ENCODE measurements at regions of chr1 and their contacts with region 1.

Region 1: GRCh38 chr1:222288040-222288439 is 259.9 kb downstream of the HHIPL2 start:
- DNase-seq: peak; percentile 77 to 87
- H3K4me3 ChIP-seq: peak overlapping the region; percentile 3; the same call in 1 of the 2 replicates
- H3K27ac ChIP-seq: peak overlapping the region; percentile 67
- H3K4me1 ChIP-seq: peaks cover 39% of the 10 kb centered on the region
- H3K27me3 ChIP-seq: no peaks in the 10 kb centered on the region
- CTCF ChIP-seq: no peak

Region 2: DNA sequence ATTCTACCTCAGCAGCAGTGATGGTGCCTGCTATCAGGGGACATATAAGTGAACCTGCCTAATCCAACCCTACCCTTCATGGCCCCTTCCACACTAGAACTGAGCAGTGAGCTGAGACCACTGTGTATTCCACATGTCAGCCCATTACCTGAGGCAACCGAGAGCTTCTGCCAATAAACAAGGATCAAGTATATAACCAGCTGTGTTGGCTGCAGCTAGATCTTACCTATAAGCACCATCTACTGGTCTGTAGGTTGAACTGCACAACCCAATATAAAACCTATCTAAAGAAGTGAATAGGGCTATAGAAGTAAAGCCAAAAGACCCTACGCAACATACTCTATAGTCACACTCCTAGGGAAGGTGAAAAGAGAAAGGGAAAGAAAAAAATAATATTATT is 117.0 kb before region 1 on chr1:
- CTCF ChIA-PET with region 1: no interaction called
- POLR2A ChIA-PET with region 1: no interaction called
- intact Hi-C with region 1: loop called (anchors 10 kb)
- DNase-seq: peak; percentile 3 to 38
- H3K4me3 ChIP-seq: no peak overlapping the region
- H3K27ac ChIP-seq: no peak overlapping the region
- H3K4me1 ChIP-seq: no peaks in the 10 kb centered on the region
- H3K27me3 ChIP-seq: no peaks in the 10 kb centered on the region
- CTCF ChIP-seq: peak; percentile 85

Measured in PC-9 (cell line).